Adrenal gland (tissue), 19 donors: ENCODE measurements at regions of chrX and their contacts with region 1.

Region 1: GRCh38 chrX:43559644-43560043 is 96.5 kb upstream of the MAOA start:
- DNase-seq: peak; percentile 19 to 69 (median 43)
- H3K4me3 ChIP-seq: no peak overlapping the region
- H3K27ac ChIP-seq: no peak overlapping the region
- H3K4me1 ChIP-seq: no peaks in the 10 kb centered on the region
- H3K27me3 ChIP-seq: peaks cover 10% of the 10 kb centered on the region
- CTCF ChIP-seq: peak; percentile 13 to 71 (median 54)
- POLR2A ChIP-seq: no peak

Region 2: DNA sequence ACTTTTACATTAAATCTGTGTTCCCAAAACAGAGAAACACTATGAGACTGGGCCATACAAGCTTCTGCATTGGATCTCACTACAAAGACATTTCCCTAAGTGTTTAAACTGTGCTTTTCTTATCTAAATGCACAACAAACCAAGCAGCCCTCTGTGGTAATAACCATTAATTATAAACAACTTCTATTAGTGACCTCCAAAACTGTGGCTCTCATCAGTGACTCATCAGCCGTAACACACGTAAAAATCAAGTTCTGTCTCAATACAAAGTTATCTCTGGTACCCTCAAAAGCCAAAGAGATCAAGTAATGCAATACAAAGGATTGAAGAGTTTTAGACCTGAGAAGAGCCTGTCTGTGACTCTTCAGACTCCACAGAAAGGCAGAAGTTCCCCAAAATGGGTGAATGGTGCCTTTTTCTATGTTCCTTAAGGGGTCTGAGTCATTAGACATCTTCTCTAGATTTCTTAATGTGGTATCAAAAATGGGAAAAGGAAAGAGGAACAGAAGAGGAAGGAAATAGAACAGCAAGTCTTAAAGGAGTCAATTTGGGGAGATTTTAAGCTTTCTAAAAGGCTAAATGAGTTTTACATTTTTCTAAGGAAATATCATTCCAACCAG is 591.9 kb before region 1 on chrX:
- intact Hi-C with region 1: no loop called
- DNase-seq: peak in 1 of 7 donors; percentile 18
- H3K4me3 ChIP-seq: no peak overlapping the region
- H3K27ac ChIP-seq: no peak overlapping the region
- H3K4me1 ChIP-seq: no peaks in the 10 kb centered on the region
- H3K27me3 ChIP-seq: no peaks in the 10 kb centered on the region
- CTCF ChIP-seq: no peak
- POLR2A ChIP-seq: no peak

Region 3: DNA sequence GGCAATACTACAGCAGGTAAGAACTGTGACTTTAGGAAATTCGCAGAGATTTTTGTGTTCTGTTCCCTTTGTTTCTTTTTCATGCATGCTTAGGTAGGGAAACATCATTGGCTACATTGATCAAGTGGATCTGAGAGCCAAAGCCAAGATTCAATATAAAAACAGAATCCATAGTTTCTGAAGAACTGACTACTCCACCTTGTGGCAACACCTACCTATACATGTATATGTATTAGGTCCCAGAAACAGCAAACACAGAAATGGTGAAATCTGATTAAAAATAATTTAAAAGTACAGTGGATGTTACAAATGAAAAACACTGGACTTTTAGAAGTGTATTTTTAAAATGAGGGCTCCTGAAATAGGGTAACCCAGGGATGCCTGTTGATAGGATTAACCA is 226.1 kb before region 1 on chrX:
- intact Hi-C with region 1: no loop called
- DNase-seq: no peak
- H3K4me3 ChIP-seq: no peak overlapping the region
- H3K27ac ChIP-seq: no peak overlapping the region
- H3K4me1 ChIP-seq: no peaks in the 10 kb centered on the region
- H3K27me3 ChIP-seq: no peaks in the 10 kb centered on the region
- CTCF ChIP-seq: no peak
- POLR2A ChIP-seq: no peak

Region 4: GRCh38 chrX:43741843-43742573 is 182.4 kb after region 1 on chrX:
- intact Hi-C with region 1: loop called in 1 of 2 experiments (anchors 5 kb)
- DNase-seq: peak in 4 of 7 donors; percentile 22 to 31 (median 28)
- H3K4me3 ChIP-seq: no peak overlapping the region
- H3K27ac ChIP-seq: peak overlapping the region in 2 of 5 donors; percentile 48 to 64
- H3K4me1 ChIP-seq: peaks cover 0 to 8% of the 10 kb centered on the region in 2 donors
- H3K27me3 ChIP-seq: peaks cover 1% of the 10 kb centered on the region
- CTCF ChIP-seq: no peak
- POLR2A ChIP-seq: no peak